Left cardiac atrium (tissue), 4 donors: ENCODE measurements at regions of chr1 and their contacts with region 1.

Region 1: DNA sequence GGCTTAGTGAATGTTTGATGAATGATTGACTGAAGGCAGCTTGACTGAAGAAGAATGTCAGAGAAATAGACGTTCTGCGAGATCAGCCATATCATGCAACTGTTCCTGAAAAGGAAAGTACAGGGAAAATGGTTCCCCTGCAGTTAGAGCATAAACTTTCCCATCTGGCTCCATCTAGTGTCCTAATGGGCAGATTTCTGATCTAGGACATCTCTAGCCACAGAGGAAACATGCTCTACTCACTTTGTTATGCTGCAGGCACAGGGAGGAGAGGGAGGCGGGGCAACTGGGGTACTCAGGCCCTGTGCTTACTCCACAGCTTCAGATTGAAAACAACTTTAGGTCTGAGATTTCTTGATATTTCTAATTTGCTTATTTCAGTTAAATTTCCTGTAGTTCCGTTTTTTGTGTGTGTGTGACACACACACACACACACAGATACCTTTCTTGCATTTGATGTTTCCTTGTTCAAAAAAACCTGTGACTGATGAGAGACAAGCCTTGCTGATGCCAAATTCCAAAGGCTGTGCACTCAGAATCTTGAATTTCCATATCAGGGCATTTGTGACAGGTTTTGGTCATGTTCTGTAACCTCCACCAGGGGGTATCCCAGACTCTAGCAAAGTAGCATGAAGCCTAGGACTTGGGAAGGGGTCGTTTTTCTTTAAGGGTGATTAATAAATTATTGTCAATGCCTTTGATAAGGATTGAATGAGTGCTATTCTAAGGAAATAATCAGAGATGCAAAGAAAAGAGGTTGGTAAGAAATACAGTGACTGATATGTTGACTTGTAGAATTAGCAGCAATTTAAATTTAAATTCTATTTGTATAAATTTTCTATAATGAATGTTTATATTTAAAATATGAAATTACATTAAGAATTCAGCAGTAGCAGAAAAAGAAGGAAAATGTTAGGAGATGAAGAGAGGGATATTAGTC is 139.7 kb upstream of the BEND5 start:
- DNase-seq: no peak
- ATAC-seq: peak; percentile 44 to 68

Region 2: DNA sequence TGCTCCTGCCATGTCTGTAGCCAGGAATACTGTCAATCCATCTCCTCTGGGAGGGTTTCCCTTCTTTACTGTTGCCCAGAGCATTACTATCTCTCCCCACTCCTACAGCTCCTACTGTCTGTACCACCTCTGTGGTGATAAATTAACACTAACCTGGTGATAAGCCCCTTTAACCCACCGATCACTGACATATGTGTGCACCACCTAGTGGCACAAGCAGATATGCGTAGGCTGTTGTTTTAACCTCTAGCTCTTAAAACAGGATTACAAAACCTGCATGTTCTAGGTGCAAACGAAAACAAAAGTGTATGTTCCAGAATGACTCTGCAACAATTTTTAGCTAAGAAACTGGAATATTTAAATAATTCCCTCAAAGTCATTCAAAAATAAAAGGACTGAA is 45.8 kb before region 1 on chr1:
- intact Hi-C with region 1: no loop called
- DNase-seq: no peak
- ATAC-seq: peak in 1 of 2 donors; percentile 26

Region 3: DNA sequence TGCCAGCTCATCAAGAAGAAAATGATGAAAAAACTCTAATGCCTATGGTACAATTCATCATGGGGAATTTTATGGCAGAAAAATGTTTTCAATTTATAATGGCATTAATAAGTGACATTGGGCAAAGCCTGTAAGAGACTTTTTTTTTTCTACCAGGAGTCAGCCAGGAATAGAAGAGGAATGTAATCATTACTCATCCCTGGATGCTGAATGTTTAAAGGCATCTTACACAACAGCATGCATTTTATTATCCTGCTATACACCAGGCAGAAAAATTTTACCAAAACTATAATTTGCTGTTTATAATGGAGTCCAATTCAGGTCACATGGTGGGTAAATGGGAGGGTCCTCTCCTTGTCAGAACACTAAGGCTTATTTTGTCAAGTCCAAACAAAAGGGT is 50.2 kb after region 1 on chr1:
- intact Hi-C with region 1: no loop called
- DNase-seq: no peak
- ATAC-seq: no peak

Region 4: GRCh38 chr1:49351768-49352167 is 435.4 kb after region 1 on chr1:
- intact Hi-C with region 1: no loop called
- DNase-seq: no peak
- ATAC-seq: no peak

Region 5: DNA sequence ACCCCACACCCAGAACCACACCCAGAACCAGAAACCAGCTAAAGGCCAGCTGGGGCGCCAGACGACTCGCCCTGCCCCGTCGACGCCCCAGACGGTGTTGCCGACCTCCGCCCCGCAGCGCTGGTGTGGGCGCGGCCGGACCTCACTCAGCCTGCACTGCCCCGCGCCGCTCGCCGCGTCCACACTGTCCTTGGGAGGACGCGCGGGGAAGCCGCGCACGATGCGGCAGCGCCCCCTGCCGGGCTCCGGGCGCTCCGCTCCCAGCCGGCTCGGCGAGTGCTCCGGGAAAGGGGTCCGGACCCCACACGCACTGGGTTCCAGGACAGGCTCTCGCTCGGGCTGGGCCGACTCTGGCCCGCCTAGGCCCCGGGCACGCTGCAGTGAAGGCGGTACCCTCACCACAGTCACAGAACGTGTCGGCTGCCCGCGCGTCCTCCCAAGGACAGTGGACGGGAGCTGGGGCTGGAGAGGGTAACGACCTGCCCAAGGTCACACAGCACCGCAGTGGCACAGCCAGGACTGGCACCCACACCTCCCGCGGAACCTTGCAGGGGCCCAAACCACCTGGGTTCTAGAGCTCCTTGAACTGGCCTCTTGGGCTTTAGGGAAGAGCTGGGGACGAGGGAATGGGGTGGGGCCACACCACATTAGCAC is 1416.7 kb after region 1 on chr1:
- intact Hi-C with region 1: loop called in 1 of 2 experiments (anchors 10 kb)
- DNase-seq: peak; percentile 68
- ATAC-seq: peak; percentile 95 to 97